ENCODE measurements at regions of chr18 and their contacts with region 1.

Region 1: DNA sequence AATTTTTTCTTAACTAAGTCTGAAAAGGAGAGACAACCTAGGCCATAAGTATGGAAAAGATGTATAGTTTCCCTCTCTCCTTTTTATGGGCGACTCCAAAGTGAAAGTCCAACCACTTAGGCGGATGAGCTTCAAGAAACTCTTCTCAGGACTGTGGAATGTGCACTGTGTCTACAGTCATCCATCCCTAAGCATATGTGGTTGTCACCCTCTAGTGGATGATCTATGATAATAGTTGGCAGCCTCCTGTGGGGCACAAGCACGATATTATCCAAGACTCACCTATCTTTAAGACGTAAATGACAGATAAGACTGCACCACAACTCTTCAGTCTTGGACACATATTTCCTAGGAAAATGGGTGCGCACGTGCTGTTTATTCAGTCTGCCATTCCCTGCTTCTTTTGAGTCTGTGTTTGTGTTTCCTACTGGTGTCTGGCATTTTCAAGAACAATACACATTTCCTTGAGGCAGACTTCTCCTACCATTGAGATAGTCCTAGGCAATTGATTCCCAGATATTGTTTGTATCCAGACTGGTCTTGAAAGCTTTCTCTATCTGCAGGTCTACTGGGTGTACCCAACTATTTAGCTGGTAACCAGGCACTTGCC is 145.5 kb upstream of the CTAGE1 start:
- DNase-seq: peak; percentile 55
- H3K4me3 ChIP-seq: no peak overlapping the region
- H3K27ac ChIP-seq: no peak overlapping the region
- H3K4me1 ChIP-seq: no peaks in the 10 kb centered on the region
- H3K27me3 ChIP-seq: no peaks in the 10 kb centered on the region
- CTCF ChIP-seq: peak; percentile 61

Region 2: GRCh38 chr18:21914739-21915319 is 648.4 kb before region 1 on chr18:
- intact Hi-C with region 1: loop called (anchors 5 kb)
- DNase-seq: peak; percentile 32
- H3K4me3 ChIP-seq: no peak overlapping the region
- H3K27ac ChIP-seq: no peak overlapping the region
- H3K4me1 ChIP-seq: no peaks in the 10 kb centered on the region
- H3K27me3 ChIP-seq: no peaks in the 10 kb centered on the region
- CTCF ChIP-seq: peak; percentile 40

Region 3: GRCh38 chr18:21955757-21956652 is 607.2 kb before region 1 on chr18:
- intact Hi-C with region 1: loop called (anchors 10 kb)
- DNase-seq: peak; percentile 87
- H3K4me3 ChIP-seq: no peak overlapping the region
- H3K27ac ChIP-seq: no peak overlapping the region
- H3K4me1 ChIP-seq: no peaks in the 10 kb centered on the region
- H3K27me3 ChIP-seq: no peaks in the 10 kb centered on the region
- CTCF ChIP-seq: peak; percentile 92

Region 4: GRCh38 chr18:22108674-22109073 is 454.5 kb before region 1 on chr18:
- intact Hi-C with region 1: loop called (anchors 10 kb)
- DNase-seq: no peak
- H3K4me3 ChIP-seq: no peak overlapping the region
- H3K27ac ChIP-seq: no peak overlapping the region
- H3K4me1 ChIP-seq: no peaks in the 10 kb centered on the region
- H3K27me3 ChIP-seq: no peaks in the 10 kb centered on the region
- CTCF ChIP-seq: no peak

Region 5: DNA sequence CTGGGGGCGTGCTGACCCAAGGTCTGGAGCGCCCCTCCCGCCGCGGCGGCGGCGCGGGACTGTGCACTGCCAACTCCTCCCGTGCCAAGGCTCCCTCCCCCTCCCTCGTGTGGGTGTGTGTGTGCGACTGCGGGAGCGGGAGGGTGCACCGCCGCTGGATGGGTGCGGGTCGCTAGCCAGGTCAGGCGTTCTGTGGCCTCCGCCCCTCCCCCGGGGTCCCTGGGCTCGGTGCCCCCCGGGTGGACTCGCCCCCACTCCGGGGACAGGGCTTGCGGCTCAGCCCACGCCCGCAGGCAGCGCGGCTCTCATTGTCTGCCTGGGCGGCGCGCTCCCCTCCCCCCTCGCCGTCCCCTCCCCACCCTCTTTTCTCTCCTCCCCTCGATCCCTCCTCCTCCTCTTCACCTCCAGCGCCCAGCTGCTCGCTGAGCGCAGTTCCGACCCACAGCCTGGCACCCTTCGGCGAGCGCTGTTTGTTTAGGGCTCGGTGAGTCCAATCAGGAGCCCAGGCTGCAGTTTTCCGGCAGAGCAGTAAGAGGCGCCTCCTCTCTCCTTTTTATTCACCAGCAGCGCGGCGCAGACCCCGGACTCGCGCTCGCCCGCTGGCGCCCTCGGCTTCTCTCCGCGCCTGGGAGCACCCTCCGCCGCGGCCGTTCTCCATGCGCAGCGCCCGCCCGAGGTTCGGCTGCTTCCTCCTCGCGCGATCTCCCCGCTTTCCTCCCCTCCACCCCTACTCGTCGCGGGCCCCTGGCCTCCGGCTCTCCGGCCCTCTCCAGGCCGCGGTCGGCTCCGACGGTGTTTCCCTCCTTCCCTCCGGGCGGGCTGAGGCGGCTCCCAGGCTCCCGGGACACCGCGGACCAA is 394.0 kb before region 1 on chr18 and contains the start of gene GATA6:
- intact Hi-C with region 1: loop called (anchors 5 kb)
- DNase-seq: peak; percentile 94
- H3K4me3 ChIP-seq: peak within 1 kb of the TSS; percentile 82
- H3K27ac ChIP-seq: peak within 1 kb of the TSS; percentile 92
- H3K4me1 ChIP-seq: no peaks in the 10 kb centered on the region
- H3K27me3 ChIP-seq: peaks cover 28% of the 10 kb centered on the region
- CTCF ChIP-seq: peak; percentile 6
- total RNA-seq, gene GATA6: 52.7 to 61.3 TPM

Region 6: DNA sequence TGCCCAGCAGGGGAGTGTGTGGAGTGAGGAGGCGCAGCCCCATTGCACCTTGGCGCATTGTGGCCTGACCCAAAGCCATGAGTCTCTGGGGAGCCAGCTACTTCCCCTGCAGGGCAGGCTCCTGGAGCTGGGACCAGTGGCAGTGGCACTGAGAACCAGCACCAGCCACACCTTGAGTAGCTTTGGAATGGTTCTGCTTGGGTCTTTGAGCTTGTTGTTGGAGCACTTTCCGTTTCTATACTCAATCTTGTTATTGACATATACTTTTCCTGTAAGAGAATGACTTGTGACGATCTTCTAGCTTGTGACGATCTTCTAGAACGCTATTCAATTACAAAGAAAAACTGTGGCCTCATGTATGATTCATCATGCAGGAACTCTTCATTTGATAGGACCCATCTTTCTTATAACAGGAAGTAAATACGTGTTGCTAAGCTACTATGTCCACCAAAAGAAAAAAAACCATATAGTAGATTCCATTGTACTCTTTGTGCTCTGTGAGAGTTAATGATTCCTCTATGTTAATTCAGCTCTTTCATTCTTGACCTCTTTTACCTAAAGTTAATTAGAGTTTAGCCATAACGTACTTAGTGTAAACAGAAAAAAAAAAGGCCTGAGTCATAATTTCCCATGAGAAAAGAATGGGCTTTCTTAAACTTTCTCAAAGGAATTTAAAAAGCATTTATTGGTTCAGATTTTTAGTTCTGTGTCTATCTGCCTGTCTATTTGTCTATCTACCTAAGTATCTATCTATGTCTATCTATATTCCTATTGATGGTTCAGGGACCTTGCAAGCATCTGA is 280.7 kb before region 1 on chr18:
- intact Hi-C with region 1: loop called (anchors 10 kb)
- DNase-seq: no peak
- H3K4me3 ChIP-seq: no peak overlapping the region
- H3K27ac ChIP-seq: peak overlapping the region; percentile 66
- H3K4me1 ChIP-seq: peaks cover 8% of the 10 kb centered on the region
- H3K27me3 ChIP-seq: no peaks in the 10 kb centered on the region
- CTCF ChIP-seq: no peak

Region 7: GRCh38 chr18:22348521-22349316 is 214.5 kb before region 1 on chr18:
- intact Hi-C with region 1: loop called (anchors 10 kb)
- DNase-seq: peak; percentile 74
- H3K4me3 ChIP-seq: peak overlapping the region; percentile 45
- H3K27ac ChIP-seq: peak overlapping the region; percentile 78
- H3K4me1 ChIP-seq: no peaks in the 10 kb centered on the region
- H3K27me3 ChIP-seq: no peaks in the 10 kb centered on the region
- CTCF ChIP-seq: no peak